Aorta (tissue), 5 donors: ENCODE measurements at regions of chr17 and their contacts with region 1.

Region 1: DNA sequence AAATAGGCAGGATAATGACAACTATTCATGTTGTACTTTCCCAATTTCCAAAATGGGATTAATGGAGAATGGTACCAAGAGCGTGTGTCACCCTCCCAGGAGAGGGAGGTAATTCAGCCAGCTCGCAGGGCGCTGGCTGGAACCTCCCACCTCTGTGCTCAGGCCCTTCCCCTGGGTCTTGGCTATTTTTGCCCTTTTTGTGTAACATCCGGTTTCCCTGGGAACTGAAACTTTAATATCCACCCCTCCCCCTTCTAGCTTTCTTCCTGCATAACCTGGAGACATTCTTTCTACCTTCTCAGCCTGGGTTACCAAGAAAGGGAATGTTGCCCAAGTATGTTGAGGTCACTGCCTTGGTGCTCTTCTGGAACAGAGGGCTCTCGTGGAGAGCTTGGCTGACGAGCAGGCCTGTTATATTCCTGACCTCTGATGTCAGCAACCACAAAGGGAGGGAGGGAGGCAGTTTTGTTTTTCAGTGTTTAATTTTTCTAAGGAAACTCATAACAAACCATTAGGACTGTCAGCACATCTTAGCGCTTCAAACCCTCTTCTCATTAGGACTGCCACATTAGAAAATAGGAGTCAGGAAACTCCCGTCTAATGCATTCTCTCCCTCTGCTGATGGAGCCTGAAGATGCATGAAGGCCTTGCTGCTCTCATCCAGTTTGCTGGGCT is 25.6 kb downstream of the ITGB3 start:
- DNase-seq: peak; percentile 88 to 90
- ATAC-seq: peak; percentile 88
- H3K4me3 ChIP-seq: no peak overlapping the region
- H3K27ac ChIP-seq: peak overlapping the region; percentile 91 to 100
- H3K4me1 ChIP-seq: peaks cover 5 to 15% of the 10 kb centered on the region in 2 donors
- H3K27me3 ChIP-seq: no peaks in the 10 kb centered on the region

Region 2: DNA sequence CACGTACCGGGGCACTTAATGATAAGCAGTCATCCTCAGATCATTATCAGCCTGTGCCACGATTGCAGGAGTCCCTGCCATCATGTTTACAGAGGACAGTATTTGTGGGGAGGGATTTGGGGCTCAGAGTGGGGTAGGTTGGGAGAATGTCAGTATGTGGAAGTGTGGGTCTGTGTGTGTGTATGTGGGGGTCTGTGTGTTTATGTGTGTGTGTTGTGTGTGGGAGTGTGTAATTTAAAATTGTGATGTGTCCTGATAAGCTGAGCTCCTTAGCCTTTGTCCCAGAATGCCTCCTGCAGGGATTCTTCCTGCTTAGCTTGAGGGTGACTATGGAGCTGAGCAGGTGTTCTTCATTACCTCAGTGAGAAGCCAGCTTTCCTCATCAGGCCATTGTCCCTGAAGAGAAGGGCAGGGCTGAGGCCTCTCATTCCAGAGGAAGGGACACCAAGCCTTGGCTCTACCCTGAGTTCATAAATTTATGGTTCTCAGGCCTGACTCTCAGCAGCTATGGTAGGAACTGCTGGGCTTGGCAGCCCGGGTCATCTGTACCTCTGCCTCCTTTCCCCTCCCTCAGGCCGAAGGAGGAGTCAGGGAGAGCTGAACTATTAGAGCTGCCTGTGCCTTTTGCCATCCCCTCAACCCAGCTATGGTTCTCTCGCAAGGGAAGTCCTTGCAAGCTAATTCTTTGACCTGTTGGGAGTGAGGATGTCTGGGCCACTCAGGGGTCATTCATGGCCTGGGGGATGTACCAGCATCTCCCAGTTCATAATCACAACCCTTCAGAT is 31.2 kb after region 1 on chr17:
- intact Hi-C with region 1: loop called (anchors 5 kb)
- DNase-seq: no peak
- ATAC-seq: no peak
- H3K4me3 ChIP-seq: no peak overlapping the region
- H3K27ac ChIP-seq: peak overlapping the region in 1 of 2 donors; percentile 71
- H3K4me1 ChIP-seq: peaks cover 0 to 6% of the 10 kb centered on the region in 2 donors
- H3K27me3 ChIP-seq: no peaks in the 10 kb centered on the region